ENCODE measurements at regions of chr7 and their contacts with region 1.

Region 1: DNA sequence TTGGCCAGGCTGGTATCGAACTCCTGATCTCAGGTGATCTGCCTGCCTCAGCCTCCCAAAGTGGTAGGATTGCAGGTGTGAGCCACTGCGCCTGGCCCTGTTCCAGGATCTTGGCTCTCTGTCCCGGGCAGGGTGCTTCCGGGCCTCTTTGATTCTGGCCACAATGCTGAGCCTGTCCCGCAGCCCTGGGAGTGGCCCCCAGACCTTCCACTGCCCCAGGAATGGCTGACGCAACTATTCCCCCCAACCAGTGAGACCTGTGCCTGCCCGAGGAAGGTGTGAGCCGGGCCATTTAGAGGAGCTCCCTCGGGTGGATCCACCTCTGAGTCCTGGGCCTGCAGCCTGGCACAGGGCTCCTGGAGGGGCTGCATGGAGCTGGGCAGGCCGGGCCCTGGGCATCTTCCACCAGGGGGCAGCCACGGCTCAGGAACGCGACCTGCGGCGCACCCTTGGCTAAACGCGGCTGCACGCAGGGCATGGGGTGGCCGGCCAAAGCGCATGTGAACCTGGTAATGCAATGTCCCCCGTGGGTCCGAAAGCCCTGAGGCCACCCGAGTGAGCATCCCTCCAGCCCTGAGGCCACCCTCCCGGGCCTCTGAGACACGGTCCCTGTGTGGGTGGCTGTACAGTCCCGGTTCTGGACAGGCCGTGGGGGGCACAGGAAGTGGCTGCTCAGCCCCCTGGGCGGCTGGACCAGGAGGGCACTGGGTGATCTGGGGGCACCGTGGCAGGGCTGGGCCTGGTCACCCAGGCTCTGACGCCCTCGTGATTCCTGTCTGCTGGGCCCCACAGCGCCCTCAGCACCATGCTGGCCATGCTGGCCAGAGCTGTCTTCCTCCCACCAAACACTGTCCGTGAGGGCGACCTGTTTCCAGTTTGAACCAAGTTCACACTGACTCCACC is 24.8 kb downstream of the GRIFIN start:
- DNase-seq: peak; percentile 87
- H3K4me3 Mint-ChIP-seq: peak overlapping the region; percentile 46
- H3K27ac Mint-ChIP-seq: no peak overlapping the region
- H3K4me1 Mint-ChIP-seq: peaks cover 7% of the 10 kb centered on the region
- H3K27me3 Mint-ChIP-seq: no peaks in the 10 kb centered on the region

Region 2: DNA sequence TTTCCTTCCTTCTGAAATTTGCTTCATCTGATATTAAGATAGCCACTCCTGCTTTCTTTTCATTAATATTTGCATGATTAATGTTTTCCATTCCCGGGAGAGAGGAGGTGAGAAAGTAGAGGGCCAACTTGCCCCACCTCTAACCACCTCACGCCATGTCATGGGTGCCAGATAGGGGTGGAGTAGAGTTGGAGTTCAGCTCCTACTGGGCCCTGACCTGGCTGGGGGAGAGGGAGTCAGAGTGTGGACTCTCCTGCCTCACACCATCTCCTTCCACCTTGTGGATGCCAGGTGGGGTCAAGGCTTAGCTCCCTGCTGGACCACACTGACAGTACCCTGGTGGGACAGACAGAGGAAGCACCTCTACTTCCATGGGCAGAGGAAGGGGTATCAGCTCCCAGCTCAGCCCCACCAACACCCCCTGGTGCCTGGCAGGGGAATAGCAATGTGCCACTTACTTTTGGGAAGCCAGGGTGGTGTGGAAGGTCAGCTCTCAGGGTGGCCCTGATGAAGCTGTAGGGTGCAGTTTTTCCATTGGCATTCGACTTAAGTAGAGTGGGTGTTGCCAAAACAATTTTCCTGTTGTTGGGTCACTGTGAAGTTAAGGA is 20.1 kb before region 1 on chr7:
- CTCF ChIA-PET with region 1: interaction called, 18 read pairs
- POLR2A ChIA-PET with region 1: no interaction called
- intact Hi-C with region 1: no loop called
- DNase-seq: peak; percentile 67
- H3K4me3 Mint-ChIP-seq: no peak overlapping the region
- H3K27ac Mint-ChIP-seq: no peak overlapping the region
- H3K4me1 Mint-ChIP-seq: peaks cover 5% of the 10 kb centered on the region
- H3K27me3 Mint-ChIP-seq: no peaks in the 10 kb centered on the region

Region 3: DNA sequence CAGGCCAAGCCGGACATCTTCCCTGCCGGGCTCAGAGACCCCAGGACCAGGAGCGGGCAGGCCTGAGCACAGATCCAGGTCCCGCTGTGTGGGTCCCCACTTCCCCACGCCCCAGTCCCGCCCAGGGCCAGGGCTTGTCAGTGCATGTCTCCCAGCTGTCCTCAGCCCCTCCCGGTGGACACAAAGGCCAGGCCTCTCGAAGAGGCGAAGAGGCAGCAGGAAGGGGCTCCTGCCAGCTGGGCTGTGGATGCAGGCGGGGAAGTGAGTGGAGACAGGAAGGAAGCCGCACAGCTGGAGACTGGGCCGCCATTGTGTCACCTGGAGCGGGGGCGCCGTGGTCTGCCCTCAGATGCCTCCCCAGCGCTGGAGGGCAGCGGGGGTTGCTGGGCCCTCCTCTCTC is 20.0 kb after region 1 on chr7:
- CTCF ChIA-PET with region 1: interaction called, 140 read pairs
- POLR2A ChIA-PET with region 1: interaction called, 5 read pairs
- intact Hi-C with region 1: loop called (anchors 1 kb)
- DNase-seq: no peak
- H3K4me3 Mint-ChIP-seq: no peak overlapping the region
- H3K27ac Mint-ChIP-seq: no peak overlapping the region
- H3K4me1 Mint-ChIP-seq: peaks cover 3% of the 10 kb centered on the region
- H3K27me3 Mint-ChIP-seq: peaks cover 2% of the 10 kb centered on the region

Region 4: DNA sequence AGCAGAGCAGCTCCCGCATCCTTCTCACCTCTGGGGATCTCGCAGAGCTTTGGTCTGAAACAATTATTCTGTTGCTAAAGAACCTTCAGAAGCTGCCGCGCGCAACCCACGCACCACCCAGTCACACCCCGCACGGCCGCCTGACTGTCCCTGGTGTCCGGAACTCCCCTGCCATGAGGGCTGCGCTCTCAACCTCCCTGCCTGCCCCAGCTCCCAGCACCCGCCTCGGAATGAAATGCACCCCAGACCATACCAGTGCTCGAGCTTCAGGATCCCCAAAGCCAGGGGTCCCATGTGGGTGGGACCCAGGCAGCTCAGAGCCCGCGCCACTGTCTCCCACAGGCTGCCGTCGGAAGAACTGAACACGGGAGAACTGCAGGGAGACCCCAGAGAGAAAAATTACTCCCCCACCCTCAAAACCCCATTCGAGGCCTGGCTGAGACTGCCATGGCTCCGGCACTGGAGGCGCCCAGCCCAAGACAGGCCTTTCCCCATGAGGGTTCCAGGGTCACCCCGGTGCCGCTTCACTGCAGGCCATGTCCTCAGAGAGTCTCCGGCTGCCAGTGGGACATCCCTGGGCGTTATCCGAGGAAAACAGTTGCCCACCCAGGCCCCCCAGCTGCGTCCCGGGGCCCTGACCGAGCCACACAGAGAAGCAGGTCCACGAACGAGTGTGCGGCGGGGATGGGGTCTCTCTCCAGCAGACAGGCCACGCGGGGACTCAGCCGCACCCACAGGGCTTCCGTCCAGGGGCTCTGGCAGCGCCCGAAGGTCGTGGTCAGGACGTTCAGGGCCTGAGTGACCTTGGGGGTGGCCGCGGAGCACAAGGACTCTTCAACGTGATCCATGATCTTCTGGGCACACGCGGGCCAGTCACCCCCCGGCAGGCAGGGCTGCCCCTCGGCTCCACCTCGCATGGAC is 91.8 kb after region 1 on chr7:
- CTCF ChIA-PET with region 1: no interaction called
- POLR2A ChIA-PET with region 1: no interaction called
- intact Hi-C with region 1: no loop called
- DNase-seq: no peak
- H3K4me3 Mint-ChIP-seq: no peak overlapping the region
- H3K27ac Mint-ChIP-seq: no peak overlapping the region
- H3K4me1 Mint-ChIP-seq: no peaks in the 10 kb centered on the region
- H3K27me3 Mint-ChIP-seq: no peaks in the 10 kb centered on the region

Region 5: DNA sequence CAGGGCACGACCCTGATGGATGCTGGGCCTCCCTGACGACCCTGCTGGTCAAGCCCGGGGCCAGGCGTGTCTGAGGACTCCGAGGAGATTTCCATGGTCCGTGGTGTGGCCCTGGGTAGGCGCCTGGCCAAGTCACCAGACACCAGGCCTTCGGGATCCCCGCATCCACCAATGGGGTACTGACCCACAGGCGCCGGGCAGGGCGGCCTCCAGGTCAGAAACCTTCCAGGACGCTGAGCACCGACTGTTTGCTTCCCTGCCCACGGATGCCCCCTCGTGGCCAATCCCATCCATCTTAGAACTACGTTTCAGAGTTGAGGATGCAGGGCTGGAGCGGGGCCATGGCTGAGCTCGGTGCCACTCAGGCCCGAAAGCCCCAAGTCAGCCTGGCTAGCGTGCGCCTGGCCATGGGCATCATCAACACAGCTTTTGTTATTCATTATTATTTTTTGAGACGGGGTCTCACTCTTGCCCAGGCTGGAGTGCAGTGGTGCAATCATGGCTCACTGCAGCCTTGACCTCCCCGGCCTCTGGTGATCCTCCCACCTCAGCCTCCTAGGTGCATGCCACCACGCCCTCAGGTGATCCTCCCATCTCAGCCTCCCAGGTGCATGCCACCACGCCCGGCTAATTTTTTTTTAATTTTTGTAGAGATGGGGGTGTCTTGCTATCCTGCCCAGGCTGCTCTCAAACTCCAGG is 229.5 kb after region 1 on chr7:
- CTCF ChIA-PET with region 1: interaction called, 39 read pairs
- POLR2A ChIA-PET with region 1: no interaction called
- intact Hi-C with region 1: loop called (anchors 2 kb)
- DNase-seq: peak; percentile 72
- H3K4me3 Mint-ChIP-seq: no peak overlapping the region
- H3K27ac Mint-ChIP-seq: no peak overlapping the region
- H3K4me1 Mint-ChIP-seq: no peaks in the 10 kb centered on the region
- H3K27me3 Mint-ChIP-seq: peaks cover 5% of the 10 kb centered on the region

Measured in activated CD4-positive, alpha-beta memory T cell treated with anti-CD3 and anti-CD28 coated beads for 36 hours (primary cell).